ENCODE measurements at regions of chr5 and their contacts with region 1.

Region 1: DNA sequence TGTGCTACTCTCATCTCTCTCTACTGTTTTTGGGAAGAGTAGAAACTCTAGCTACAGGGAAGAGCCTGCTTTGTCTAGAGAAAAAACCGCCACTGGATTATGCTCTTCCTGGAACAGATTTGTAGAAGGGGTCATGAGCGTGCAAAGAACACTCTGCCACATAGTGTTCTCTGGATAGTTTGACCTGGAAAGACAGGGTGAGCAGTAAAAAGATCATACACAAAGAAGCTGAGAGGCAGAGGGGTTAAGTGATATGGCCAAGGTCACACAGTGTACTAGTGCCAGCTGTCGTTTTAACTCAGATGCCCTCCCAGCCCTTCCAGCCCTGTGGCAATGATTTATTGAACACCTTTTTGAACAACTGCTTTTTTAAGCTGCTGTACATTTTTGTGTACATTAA is 182.2 kb downstream of the NNT start:
- DNase-seq: no peak
- H3K4me3 ChIP-seq: no peak overlapping the region
- H3K27ac ChIP-seq: no peak overlapping the region
- H3K4me1 ChIP-seq: no peaks in the 10 kb centered on the region
- H3K27me3 ChIP-seq: no peaks in the 10 kb centered on the region
- CTCF ChIP-seq: no peak
- EP300 ChIP-seq: no peak
- POLR2A ChIP-seq: no peak

Region 2: DNA sequence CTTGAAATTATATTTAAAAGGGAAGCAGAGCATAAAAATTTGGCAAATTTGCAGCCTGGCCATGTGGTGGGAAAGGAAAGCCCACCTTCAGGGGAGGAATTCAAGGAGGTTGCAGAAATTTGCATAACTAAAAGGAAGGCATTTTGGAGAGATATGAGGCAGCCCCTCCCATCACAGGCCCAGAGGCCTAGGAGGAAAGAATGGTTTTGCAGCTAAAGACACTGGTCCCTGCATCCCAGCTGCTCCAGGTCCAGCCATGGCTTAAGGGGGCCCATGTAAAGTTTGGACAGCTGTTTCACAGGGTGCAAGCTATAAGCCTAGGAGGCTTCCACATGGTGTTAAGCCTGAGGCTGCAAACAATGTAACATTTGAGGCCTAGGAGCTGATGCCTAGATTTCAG is 30.3 kb after region 1 on chr5:
- in situ Hi-C with region 1: no loop called
- intact Hi-C with region 1: loop called (anchors 1 kb)
- DNase-seq: no peak
- H3K4me3 ChIP-seq: no peak overlapping the region
- H3K27ac ChIP-seq: no peak overlapping the region
- H3K4me1 ChIP-seq: no peaks in the 10 kb centered on the region
- H3K27me3 ChIP-seq: no peaks in the 10 kb centered on the region
- CTCF ChIP-seq: no peak
- EP300 ChIP-seq: no peak
- POLR2A ChIP-seq: no peak